Dendritic cell treated with granulocyte-macrophage colony-stimulating factor and Interleukin-4, amounts not matched to agents 40 ng/mL and 50 ng/mL, for 4 days (primary cell): ENCODE measurements at regions of chr17 and their contacts with region 1.

Region 1: GRCh38 chr17:31645351-31645750 is 213.7 kb downstream of the COPRS start:
- H3K4me3 Mint-ChIP-seq: no peak overlapping the region
- H3K27ac Mint-ChIP-seq: no peak overlapping the region
- H3K4me1 Mint-ChIP-seq: no peaks in the 10 kb centered on the region
- H3K27me3 Mint-ChIP-seq: no peaks in the 10 kb centered on the region

Region 2: DNA sequence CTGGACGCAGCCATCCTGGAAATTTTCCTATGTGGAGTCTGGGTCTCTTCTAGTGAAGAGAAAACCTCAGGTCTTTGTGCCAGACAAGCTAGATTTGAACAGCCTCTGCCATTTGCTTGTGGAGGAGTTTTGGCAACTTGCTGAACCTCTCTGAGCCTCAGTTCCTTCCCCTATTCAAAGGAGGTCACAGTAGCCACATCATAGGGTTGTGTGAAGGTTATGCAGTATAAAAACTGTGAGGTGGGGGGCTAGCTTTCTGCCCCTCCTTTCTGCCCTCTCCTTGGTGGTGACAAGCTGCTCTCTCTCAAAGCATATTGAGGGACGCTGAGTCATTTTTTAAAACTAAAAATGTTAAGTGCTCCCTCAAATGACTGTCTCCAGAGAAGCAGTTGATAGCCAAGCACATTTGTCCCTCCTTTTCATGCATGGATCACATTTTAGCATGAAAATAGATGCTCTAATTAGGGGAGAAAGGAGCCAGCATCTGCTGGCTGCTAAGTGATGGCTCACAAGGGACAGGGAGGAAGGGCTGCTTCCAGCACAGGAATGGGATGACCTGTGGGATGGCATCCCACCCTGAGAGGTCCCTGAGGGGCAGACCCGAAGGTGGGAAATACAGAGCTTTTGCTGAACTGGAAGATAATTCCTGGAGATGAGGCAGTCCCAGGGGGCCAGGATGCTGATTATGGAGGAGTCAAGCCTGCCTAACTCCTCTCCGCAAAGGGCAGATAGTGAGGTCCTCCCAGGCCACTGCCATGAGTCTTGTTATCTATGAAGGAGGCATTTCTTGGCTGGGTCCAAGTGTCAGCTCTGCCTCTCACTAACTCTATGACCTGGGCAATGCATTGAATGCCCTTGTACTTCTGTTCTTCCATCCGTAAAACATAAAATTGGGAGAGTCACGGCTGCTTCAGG is 35.1 kb before region 1 on chr17:
- intact Hi-C with region 1: loop called (anchors 5 kb)
- H3K4me3 Mint-ChIP-seq: no peak overlapping the region
- H3K27ac Mint-ChIP-seq: no peak overlapping the region
- H3K4me1 Mint-ChIP-seq: no peaks in the 10 kb centered on the region
- H3K27me3 Mint-ChIP-seq: peaks cover 2% of the 10 kb centered on the region